ENCODE measurements at regions of chr9 and their contacts with region 1.

Region 1: DNA sequence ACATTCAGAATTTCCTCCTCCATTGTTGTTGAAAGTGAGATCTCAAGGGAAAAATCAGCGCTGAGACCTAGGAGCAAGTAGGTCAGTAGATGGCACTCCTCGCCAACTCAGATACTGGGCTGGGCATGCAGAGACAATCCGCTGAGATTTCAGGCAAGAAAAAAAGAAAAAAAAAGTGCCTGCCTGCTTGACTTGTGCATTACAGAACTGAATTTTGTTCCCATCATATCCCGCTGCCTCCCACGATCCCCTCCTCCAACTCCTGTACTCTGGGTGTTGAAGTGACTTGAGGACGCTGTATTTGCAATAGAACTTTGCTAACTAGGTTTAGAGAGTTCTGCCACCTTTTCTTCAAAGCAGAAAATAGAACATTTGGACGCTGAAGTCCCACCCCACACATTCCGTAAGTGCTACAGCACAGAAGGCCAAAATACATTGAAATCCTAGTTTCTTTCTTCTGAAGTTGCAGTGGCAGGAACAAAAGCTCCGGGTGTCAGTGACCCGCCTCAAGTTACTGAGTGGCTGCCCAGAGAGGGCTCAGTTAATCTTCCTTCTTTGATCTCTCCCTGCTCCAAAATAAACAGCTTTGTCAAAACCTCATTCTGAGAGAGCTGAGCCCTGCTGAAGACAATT is 265.8 kb downstream of the MLLT3 start:
- DNase-seq: no peak
- H3K4me3 Mint-ChIP-seq: no peak overlapping the region
- H3K27ac Mint-ChIP-seq: no peak overlapping the region
- H3K4me1 Mint-ChIP-seq: peaks cover 47% of the 10 kb centered on the region
- H3K27me3 Mint-ChIP-seq: no peaks in the 10 kb centered on the region

Region 2: DNA sequence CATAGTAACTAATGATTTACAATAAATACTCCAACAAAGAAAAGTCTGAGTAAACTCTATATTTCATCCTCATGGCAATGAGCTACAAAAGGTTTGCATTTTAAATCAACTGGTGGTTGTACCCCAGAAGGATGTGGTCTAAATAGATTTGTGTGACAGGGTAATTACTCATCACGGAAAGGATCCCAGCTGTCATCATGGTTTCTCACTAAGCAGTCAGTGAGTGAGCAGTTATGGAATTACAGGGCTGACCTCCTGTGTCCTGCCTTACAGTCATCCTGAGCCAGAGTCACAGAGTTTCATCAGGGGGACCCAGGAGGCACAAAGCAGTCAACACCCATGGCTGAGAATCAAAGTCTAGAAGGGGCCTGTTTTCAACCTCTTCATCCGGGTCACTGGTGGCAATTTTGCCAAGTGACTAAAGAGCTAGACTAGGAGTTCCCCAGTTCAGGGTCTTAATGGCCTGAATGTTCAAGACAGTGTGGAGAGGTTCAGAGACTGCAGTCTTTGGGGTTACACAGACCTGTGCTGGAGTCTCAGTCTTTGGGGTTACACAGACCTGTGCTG is 356.9 kb before region 1 on chr9:
- intact Hi-C with region 1: loop called (anchors 5 kb)
- DNase-seq: peak; percentile 55
- H3K4me3 Mint-ChIP-seq: no peak overlapping the region
- H3K27ac Mint-ChIP-seq: peak overlapping the region; percentile 91
- H3K4me1 Mint-ChIP-seq: peaks cover 51% of the 10 kb centered on the region
- H3K27me3 Mint-ChIP-seq: no peaks in the 10 kb centered on the region

Region 3: DNA sequence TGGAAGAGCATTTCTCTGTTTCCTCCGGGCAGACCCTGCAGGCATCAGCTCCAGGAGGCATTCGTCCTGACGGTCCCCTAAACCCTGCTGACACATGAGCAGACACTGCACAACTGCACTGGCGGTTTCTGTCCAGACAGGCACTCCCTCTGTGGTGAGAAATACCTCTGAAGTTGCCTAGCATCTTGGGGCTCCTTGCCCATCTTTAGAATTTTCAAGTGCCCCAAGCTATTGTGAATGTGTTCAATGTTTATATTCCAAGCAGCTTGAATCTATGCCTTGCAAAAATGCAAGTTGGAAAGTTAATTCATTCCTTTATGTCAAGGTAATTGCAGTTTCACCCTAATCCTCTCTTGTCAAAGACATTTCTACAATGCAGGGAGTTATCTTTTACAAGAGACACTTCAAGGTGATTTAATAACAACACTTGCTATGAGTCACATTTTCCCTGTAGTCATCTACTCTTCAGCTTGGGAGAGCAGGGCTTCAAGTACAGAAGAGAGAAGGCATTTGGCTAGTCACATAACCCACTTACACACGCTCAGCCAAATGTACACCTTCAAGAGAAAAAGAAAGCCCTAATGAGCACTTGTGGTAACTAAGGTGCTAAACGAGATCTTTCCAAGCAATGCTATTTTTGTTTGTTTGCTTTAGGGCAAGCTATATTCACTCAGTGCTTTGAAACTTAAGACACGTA is 36.7 kb before region 1 on chr9:
- intact Hi-C with region 1: loop called (anchors 5 kb)
- DNase-seq: no peak
- H3K4me3 Mint-ChIP-seq: no peak overlapping the region
- H3K27ac Mint-ChIP-seq: peak overlapping the region; percentile 24
- H3K4me1 Mint-ChIP-seq: peaks cover 41% of the 10 kb centered on the region
- H3K27me3 Mint-ChIP-seq: no peaks in the 10 kb centered on the region

Region 4: DNA sequence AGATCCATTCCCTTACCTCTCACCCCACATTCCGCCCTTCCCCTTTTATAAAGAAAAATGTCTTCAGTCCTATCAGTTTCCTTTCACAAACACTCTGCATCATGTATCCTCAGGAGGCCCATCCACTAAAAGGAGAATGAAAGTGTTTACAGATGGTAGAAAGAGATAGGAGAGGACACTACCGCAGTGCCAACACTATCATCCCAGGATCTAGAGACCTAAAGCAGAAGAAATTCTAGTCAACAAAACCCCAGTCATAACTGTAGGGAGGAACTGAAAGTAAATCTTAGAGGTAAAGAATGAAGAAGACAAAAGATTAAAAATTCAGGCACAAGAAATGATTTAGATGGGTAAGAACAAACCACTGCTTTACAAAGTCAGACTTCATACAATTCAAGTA is 151.7 kb after region 1 on chr9:
- intact Hi-C with region 1: loop called (anchors 1 kb)
- DNase-seq: peak; percentile 43
- H3K4me3 Mint-ChIP-seq: no peak overlapping the region
- H3K27ac Mint-ChIP-seq: peak overlapping the region; percentile 3
- H3K4me1 Mint-ChIP-seq: peaks cover 74% of the 10 kb centered on the region
- H3K27me3 Mint-ChIP-seq: no peaks in the 10 kb centered on the region

Region 5: GRCh38 chr9:20684035-20684872 is 327.7 kb after region 1 on chr9 and contains the start of gene FOCAD:
- intact Hi-C with region 1: loop called (anchors 2 kb)
- DNase-seq: peak; percentile 96
- H3K4me3 Mint-ChIP-seq: peak within 1 kb of the TSS; percentile 87
- H3K27ac Mint-ChIP-seq: peak within 1 kb of the TSS; percentile 82
- H3K4me1 Mint-ChIP-seq: peaks cover 21% of the 10 kb centered on the region
- H3K27me3 Mint-ChIP-seq: no peaks in the 10 kb centered on the region
- total RNA-seq, gene FOCAD: 32.2 and 36.0 TPM in 2 replicates

Region 6: GRCh38 chr9:21031091-21031807 is 674.7 kb after region 1 on chr9 and contains the start of gene HACD4:
- intact Hi-C with region 1: loop called (anchors 2 kb)
- DNase-seq: peak; percentile 69
- H3K4me3 Mint-ChIP-seq: peak within 1 kb of the TSS; percentile 67
- H3K27ac Mint-ChIP-seq: peak within 1 kb of the TSS; percentile 56
- H3K4me1 Mint-ChIP-seq: peaks cover 20% of the 10 kb centered on the region
- H3K27me3 Mint-ChIP-seq: peaks cover 3% of the 10 kb centered on the region
- total RNA-seq, gene HACD4: 2.2 and 2.4 TPM in 2 replicates

Region 7: DNA sequence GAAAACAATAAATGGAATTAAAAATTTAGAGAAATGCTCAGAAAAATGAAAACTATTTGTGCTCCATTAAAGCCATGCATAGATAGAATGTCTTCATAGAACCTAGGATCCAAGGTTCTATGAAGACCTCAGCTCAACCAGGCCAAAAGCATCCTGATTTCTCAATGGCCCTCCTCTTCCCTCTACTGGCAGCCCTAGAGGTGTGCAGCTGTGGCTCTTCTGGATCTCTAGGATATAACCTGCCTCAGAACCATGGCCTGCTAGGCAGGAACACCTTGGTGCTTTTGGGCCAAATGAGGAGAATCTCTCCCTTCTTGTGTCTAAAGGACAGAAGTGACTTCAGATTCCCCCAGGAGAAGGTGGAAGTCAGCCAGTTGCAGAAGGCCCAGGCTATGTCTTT is 1098.8 kb after region 1 on chr9:
- intact Hi-C with region 1: no loop called
- DNase-seq: no peak
- H3K4me3 Mint-ChIP-seq: no peak overlapping the region
- H3K27ac Mint-ChIP-seq: no peak overlapping the region
- H3K4me1 Mint-ChIP-seq: no peaks in the 10 kb centered on the region
- H3K27me3 Mint-ChIP-seq: peaks cover 29% of the 10 kb centered on the region